Posterior vena cava (tissue), 2 donors: ENCODE measurements at regions of chr5 and their contacts with region 1.

Region 1: GRCh38 chr5:63831381-63831780 is 130.9 kb downstream of the HTR1A start:
- DNase-seq: no peak

Region 2: DNA sequence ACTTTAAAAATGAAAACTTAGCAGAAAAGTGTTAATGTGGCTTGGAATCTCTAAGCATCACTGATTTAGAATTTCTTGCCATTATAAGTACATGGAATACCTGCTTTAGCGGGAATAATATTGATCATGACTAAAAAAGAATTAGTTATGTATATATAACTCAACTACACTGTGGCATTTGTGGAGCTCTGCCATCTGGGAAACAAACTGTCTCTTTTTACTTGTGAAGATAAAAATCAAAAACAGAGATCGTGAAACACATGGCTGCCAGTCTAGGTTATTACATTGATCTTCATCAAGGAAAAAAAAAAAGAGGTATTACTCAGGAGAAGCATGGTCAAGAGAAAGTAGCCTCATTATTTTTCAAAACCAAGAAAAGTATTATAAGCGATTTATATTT is 156.5 kb before region 1 on chr5:
- intact Hi-C with region 1: no loop called
- DNase-seq: no peak

Region 3: DNA sequence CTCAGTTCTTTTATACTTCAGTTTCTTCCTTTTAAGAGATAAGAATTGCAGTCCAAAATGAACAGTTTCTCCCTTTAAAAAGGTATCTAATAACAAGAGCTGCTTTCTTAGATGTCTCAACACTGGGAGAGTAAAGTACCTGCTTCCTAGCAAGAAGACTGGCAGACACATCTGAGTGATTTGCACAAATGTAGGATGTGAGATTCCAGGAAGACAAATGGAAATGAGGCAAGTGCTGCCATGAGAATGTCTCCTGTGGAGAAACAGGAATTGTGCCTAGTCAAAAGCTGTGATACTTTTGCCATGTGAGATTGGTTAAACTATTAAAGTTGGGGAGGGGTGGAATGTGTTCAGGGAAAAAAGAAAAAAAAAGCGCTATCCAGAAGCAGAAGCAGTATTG is 28.2 kb before region 1 on chr5:
- intact Hi-C with region 1: loop called in 1 of 2 experiments (anchors 1 kb)
- DNase-seq: no peak